CD4-positive, alpha-beta memory T cell (primary cell): ENCODE measurements at regions of chr14 and their contacts with region 1.

Region 1: DNA sequence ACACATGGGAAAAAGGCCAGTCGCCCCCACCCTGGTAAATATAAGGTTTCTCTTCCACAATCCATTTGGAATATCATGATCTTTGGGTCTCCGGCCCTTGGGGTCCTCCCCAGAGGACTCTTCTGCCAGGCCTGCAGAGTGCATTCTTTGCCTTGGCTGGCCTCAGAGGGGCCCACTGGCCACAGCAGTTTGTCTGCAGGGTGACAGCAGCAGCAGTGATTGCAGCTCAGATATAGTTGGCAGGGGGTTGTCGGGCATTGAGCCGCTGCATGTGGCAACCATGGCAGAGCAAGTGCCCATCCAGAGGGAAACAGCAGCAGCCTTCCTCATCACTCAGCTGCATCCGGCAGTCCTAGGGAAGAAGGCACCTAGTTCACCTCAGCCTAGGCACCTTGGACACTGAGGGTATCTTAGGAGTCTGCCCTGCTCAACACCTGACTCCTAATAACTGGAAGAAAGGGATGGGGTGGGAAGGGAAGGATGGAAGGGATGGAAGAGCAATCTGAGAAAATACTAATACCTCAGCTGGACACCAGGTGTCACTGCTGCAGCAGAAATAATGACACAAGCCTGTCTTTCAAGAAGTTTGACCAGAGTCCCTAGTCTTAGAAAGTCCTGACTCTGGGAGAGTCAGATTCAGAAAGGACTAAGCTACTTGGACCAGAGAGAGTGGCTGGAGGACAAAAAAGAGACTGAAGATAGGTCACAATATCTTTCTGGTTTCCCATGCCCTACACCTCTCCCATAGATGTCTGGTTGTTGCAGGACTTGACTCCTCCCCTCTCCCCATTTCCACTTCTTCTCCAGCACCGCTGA is 8.9 kb downstream of the AJUBA start:
- DNase-seq: peak in 4 of 5 donors; percentile 32 to 46 (median 38)
- H3K4me3 ChIP-seq: no peak overlapping the region
- H3K4me3 Mint-ChIP-seq: no peak overlapping the region
- H3K27ac ChIP-seq: no peak overlapping the region
- H3K27ac Mint-ChIP-seq: no peak overlapping the region
- H3K4me1 ChIP-seq: no peaks in the 10 kb centered on the region
- H3K4me1 Mint-ChIP-seq: no peaks in the 10 kb centered on the region
- H3K27me3 ChIP-seq: no peaks in the 10 kb centered on the region
- H3K27me3 Mint-ChIP-seq: peaks cover 0 to 3% of the 10 kb centered on the region in 2 donors

Region 2: GRCh38 chr14:22726012-22726411 is 247.4 kb before region 1 on chr14:
- CTCF ChIA-PET with region 1: no interaction called
- POLR2A ChIA-PET with region 1: no interaction called
- intact Hi-C with region 1: no loop called
- DNase-seq: no peak
- H3K4me3 ChIP-seq: no peak overlapping the region
- H3K4me3 Mint-ChIP-seq: no peak overlapping the region
- H3K27ac ChIP-seq: no peak overlapping the region
- H3K27ac Mint-ChIP-seq: no peak overlapping the region
- H3K4me1 ChIP-seq: no peaks in the 10 kb centered on the region
- H3K4me1 Mint-ChIP-seq: no peaks in the 10 kb centered on the region
- H3K27me3 ChIP-seq: no peaks in the 10 kb centered on the region
- H3K27me3 Mint-ChIP-seq: peaks cover 1 to 2% of the 10 kb centered on the region in 2 donors

Region 3: DNA sequence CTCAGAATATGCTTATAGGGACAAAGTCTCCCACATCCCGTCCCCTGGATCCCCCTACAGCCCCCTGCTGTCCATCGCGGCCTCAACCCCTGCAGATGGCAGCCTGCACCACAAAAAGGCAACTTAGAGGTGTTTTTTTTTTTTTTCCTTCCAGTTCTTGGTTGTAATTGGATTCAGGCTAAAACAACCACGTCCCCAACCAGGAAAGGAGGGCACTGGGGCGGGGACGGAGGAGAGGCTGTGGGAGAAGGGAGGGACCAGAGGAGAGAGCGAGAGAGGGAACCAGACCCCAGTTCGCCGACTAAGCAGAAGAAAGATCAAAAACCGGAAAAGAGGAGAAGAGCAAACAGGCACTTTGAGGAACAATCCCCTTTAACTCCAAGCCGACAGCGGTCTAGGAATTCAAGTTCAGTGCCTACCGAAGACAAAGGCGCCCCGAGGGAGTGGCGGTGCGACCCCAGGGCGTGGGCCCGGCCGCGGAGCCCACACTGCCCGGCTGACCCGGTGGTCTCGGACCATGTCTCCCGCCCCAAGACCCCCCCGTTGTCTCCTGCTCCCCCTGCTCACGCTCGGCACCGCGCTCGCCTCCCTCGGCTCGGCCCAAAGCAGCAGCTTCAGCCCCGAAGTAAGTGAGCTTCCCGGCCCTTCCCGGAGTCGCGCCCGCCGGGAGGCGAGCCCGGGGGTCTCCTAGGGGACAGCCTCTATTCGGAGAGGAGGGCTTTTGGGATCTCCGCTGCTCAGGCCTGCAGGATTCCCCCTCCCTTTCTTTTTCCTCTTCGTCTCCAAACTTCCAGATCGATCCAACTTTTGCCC is 136.9 kb before region 1 on chr14 and contains the start of gene MMP14:
- CTCF ChIA-PET with region 1: no interaction called
- POLR2A ChIA-PET with region 1: no interaction called
- intact Hi-C with region 1: no loop called
- DNase-seq: no peak
- H3K4me3 ChIP-seq: no peak within 1 kb of the TSS
- H3K4me3 Mint-ChIP-seq: peak within 1 kb of the TSS; percentile 74 to 86 (median 80)
- H3K27ac ChIP-seq: no peak within 1 kb of the TSS
- H3K27ac Mint-ChIP-seq: peak within 1 kb of the TSS in 4 of 7 donors; percentile 71 to 92 (median 78)
- H3K4me1 ChIP-seq: peaks cover 11% of the 10 kb centered on the region
- H3K4me1 Mint-ChIP-seq: peaks cover 4 to 18% (median 12%) of the 10 kb centered on the region in 4 donors
- H3K27me3 ChIP-seq: peaks cover 13% of the 10 kb centered on the region
- H3K27me3 Mint-ChIP-seq: peaks cover 8 to 22% of the 10 kb centered on the region in 2 donors
- total RNA-seq, gene MMP14: 3.0 to 3.8 TPM

Region 4: DNA sequence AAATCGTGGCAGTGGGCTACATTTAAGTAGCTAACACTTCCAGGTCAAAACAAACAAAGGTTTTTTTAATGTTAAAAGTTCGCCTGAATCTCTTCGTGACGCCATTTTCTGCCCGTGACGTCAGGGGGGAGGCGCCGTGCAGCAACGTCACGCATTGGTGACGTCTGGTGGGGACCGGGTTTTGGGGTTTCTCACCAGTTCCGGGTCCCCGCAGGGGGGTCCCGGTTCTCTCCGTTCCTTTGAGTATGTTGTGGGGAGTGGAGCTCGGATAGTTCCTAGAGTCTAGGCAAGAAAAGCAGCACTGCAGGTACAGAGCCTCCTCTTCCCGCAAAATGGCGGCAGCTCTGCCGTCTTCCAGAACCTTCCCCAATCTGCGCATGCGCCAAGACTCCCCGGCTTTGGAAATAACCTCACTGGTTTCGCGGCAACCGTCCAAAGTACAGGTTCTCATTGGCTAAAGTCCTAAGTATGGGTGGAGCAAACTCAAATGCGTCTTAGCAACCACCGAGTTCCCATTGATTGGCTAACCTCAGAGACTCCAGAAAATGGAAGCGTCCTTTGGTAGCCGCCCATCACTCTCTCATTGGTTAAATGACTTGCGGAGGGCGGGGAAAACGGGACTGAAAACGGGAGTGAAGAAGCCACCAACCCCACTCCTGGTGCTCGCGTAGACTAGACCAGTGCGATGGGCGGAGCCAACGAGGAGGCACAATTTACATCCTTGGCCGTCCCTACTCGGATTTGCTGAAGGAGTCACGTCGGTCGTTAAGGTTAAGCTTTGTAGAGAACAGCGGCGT is 54.4 kb before region 1 on chr14 and contains the start of gene RBM23:
- CTCF ChIA-PET with region 1: interaction called, 12 read pairs
- POLR2A ChIA-PET with region 1: no interaction called
- intact Hi-C with region 1: no loop called
- DNase-seq: peak; percentile 99 to 100 (median 100)
- H3K4me3 ChIP-seq: peak within 1 kb of the TSS; percentile 67 to 93
- H3K4me3 Mint-ChIP-seq: peak within 1 kb of the TSS; percentile 94 to 99 (median 96)
- H3K27ac ChIP-seq: peak within 1 kb of the TSS; percentile 98
- H3K27ac Mint-ChIP-seq: peak within 1 kb of the TSS; percentile 99 to 100 (median 100)
- H3K4me1 ChIP-seq: peaks cover 40% of the 10 kb centered on the region
- H3K4me1 Mint-ChIP-seq: peaks cover 13 to 56% (median 33%) of the 10 kb centered on the region in 4 donors
- H3K27me3 ChIP-seq: no peaks in the 10 kb centered on the region
- H3K27me3 Mint-ChIP-seq: peaks cover 0 to 4% of the 10 kb centered on the region in 2 donors
- total RNA-seq, gene RBM23: 119 to 123 TPM

Region 5: GRCh38 chr14:22945642-22946041 is 27.8 kb before region 1 on chr14:
- CTCF ChIA-PET with region 1: interaction called, 12 read pairs
- POLR2A ChIA-PET with region 1: no interaction called
- intact Hi-C with region 1: no loop called
- DNase-seq: no peak
- H3K4me3 ChIP-seq: no peak overlapping the region
- H3K4me3 Mint-ChIP-seq: no peak overlapping the region
- H3K27ac ChIP-seq: no peak overlapping the region
- H3K27ac Mint-ChIP-seq: peak overlapping the region in 2 of 7 donors; percentile 53 to 80
- H3K4me1 ChIP-seq: no peaks in the 10 kb centered on the region
- H3K4me1 Mint-ChIP-seq: peaks cover 0 to 5% (median 2%) of the 10 kb centered on the region in 4 donors
- H3K27me3 ChIP-seq: no peaks in the 10 kb centered on the region
- H3K27me3 Mint-ChIP-seq: no peaks in the 10 kb centered on the region

Region 6: GRCh38 chr14:22955702-22956569 is 17.5 kb before region 1 on chr14:
- CTCF ChIA-PET with region 1: interaction called, 24 read pairs
- POLR2A ChIA-PET with region 1: interaction called, 5 read pairs
- intact Hi-C with region 1: no loop called
- DNase-seq: peak in 1 of 5 donors; percentile 11
- H3K4me3 ChIP-seq: peak overlapping the region; percentile 30 to 89
- H3K4me3 Mint-ChIP-seq: peak overlapping the region; percentile 91 to 94 (median 92)
- H3K27ac ChIP-seq: peak overlapping the region; percentile 79
- H3K27ac Mint-ChIP-seq: peak overlapping the region; percentile 92 to 95 (median 93)
- H3K4me1 ChIP-seq: peaks cover 16% of the 10 kb centered on the region
- H3K4me1 Mint-ChIP-seq: peaks cover 13 to 22% (median 16%) of the 10 kb centered on the region in 4 donors
- H3K27me3 ChIP-seq: no peaks in the 10 kb centered on the region
- H3K27me3 Mint-ChIP-seq: no peaks in the 10 kb centered on the region

Region 7: GRCh38 chr14:22962061-22962676 is 11.3 kb before region 1 on chr14:
- CTCF ChIA-PET with region 1: interaction called, 24 read pairs
- POLR2A ChIA-PET with region 1: interaction called, 5 read pairs
- intact Hi-C with region 1: no loop called
- DNase-seq: no peak
- H3K4me3 ChIP-seq: no peak overlapping the region
- H3K4me3 Mint-ChIP-seq: no peak overlapping the region
- H3K27ac ChIP-seq: no peak overlapping the region
- H3K27ac Mint-ChIP-seq: no peak overlapping the region
- H3K4me1 ChIP-seq: peaks cover 7% of the 10 kb centered on the region
- H3K4me1 Mint-ChIP-seq: peaks cover 0 to 6% (median under 1%) of the 10 kb centered on the region in 4 donors
- H3K27me3 ChIP-seq: no peaks in the 10 kb centered on the region
- H3K27me3 Mint-ChIP-seq: no peaks in the 10 kb centered on the region

Region 8: GRCh38 chr14:22994762-22995275 is 21.4 kb after region 1 on chr14:
- CTCF ChIA-PET with region 1: interaction called, 395 read pairs
- POLR2A ChIA-PET with region 1: no interaction called
- intact Hi-C with region 1: no loop called
- DNase-seq: peak in 1 of 5 donors; percentile 29
- H3K4me3 ChIP-seq: no peak overlapping the region
- H3K4me3 Mint-ChIP-seq: no peak overlapping the region
- H3K27ac ChIP-seq: no peak overlapping the region
- H3K27ac Mint-ChIP-seq: peak overlapping the region in 2 of 7 donors; percentile 57 to 61
- H3K4me1 ChIP-seq: no peaks in the 10 kb centered on the region
- H3K4me1 Mint-ChIP-seq: no peaks in the 10 kb centered on the region
- H3K27me3 ChIP-seq: no peaks in the 10 kb centered on the region
- H3K27me3 Mint-ChIP-seq: no peaks in the 10 kb centered on the region

Region 9: GRCh38 chr14:23068476-23069412 is 95.3 kb after region 1 on chr14:
- CTCF ChIA-PET with region 1: interaction called, 1,070 read pairs
- POLR2A ChIA-PET with region 1: no interaction called
- intact Hi-C with region 1: no loop called
- DNase-seq: peak; percentile 77 to 81 (median 78)
- H3K4me3 ChIP-seq: no peak overlapping the region
- H3K4me3 Mint-ChIP-seq: peak overlapping the region in 7 of 8 donors; percentile 34 to 74 (median 61)
- H3K27ac ChIP-seq: no peak overlapping the region
- H3K27ac Mint-ChIP-seq: peak overlapping the region; percentile 34 to 93 (median 87)
- H3K4me1 ChIP-seq: peaks cover 28% of the 10 kb centered on the region
- H3K4me1 Mint-ChIP-seq: peaks cover 19 to 41% (median 32%) of the 10 kb centered on the region in 4 donors
- H3K27me3 ChIP-seq: no peaks in the 10 kb centered on the region
- H3K27me3 Mint-ChIP-seq: no peaks in the 10 kb centered on the region